Activated CD4-positive, alpha-beta T cell treated with anti-CD3 and anti-CD28 coated beads, Interleukin-2, amount 10 ng/mL, durations not matched to agents 24 days and 14 days (primary cell): ENCODE measurements at regions of chr1 and their contacts with region 1.

Region 1: GRCh38 chr1:35030756-35031446 is 844 bp downstream of the ZMYM6 start:
- DNase-seq: peak; percentile 82
- H3K4me3 Mint-ChIP-seq: peak overlapping the region; percentile 99
- H3K27ac Mint-ChIP-seq: peak overlapping the region; percentile 93
- H3K4me1 Mint-ChIP-seq: peaks cover 23% of the 10 kb centered on the region
- H3K27me3 Mint-ChIP-seq: peaks cover 2% of the 10 kb centered on the region

Region 2: GRCh38 chr1:34859446-34860200 is 171.3 kb before region 1 on chr1 and contains the start of gene SMIM12:
- intact Hi-C with region 1: loop called (anchors 5 kb)
- DNase-seq: peak; percentile 97
- H3K4me3 Mint-ChIP-seq: peak within 1 kb of the TSS; percentile 95
- H3K27ac Mint-ChIP-seq: peak within 1 kb of the TSS; percentile 99
- H3K4me1 Mint-ChIP-seq: peaks cover 43% of the 10 kb centered on the region
- H3K27me3 Mint-ChIP-seq: no peaks in the 10 kb centered on the region
- total RNA-seq, gene SMIM12: 63.2 TPM in 2 replicates

Region 3: DNA sequence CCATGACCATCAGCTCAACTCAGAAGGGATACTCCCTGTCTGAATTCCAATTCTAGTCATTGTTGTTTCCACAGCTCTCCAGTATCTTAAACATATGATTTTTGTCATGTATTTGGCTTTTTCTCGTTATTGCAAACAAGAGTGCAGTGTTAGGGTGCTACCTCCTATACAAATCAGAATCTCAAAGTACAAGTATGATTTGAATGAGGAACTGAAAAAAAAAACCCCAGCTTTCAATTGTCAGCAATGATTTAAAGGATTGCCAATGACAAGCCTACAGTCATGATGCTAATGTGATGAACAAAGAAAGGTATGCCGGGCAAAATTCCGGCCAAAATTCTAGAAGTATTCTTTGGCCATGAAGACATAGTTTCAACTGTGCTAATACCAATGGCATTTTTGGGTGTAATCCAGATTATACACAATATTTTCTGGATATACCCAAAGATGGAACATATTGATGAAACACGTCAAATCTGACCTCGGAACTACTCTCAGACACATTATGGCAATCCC is 60.6 kb before region 1 on chr1:
- intact Hi-C with region 1: no loop called
- DNase-seq: no peak
- H3K4me3 Mint-ChIP-seq: no peak overlapping the region
- H3K27ac Mint-ChIP-seq: no peak overlapping the region
- H3K4me1 Mint-ChIP-seq: no peaks in the 10 kb centered on the region
- H3K27me3 Mint-ChIP-seq: peaks cover 6% of the 10 kb centered on the region

Region 4: GRCh38 chr1:34984793-34985608 is 45.9 kb before region 1 on chr1 and contains the start of gene TMEM35B:
- intact Hi-C with region 1: loop called (anchors 5 kb)
- DNase-seq: peak; percentile 95
- H3K4me3 Mint-ChIP-seq: peak within 1 kb of the TSS; percentile 95
- H3K27ac Mint-ChIP-seq: peak within 1 kb of the TSS; percentile 92
- H3K4me1 Mint-ChIP-seq: peaks cover 32% of the 10 kb centered on the region
- H3K27me3 Mint-ChIP-seq: no peaks in the 10 kb centered on the region
- total RNA-seq, gene TMEM35B: 20.1 and 22.1 TPM in 2 replicates

Region 5: GRCh38 chr1:35171579-35172421 is 140.9 kb after region 1 on chr1:
- intact Hi-C with region 1: no loop called
- DNase-seq: no peak
- H3K4me3 Mint-ChIP-seq: no peak overlapping the region
- H3K27ac Mint-ChIP-seq: no peak overlapping the region
- H3K4me1 Mint-ChIP-seq: no peaks in the 10 kb centered on the region
- H3K27me3 Mint-ChIP-seq: peaks cover 2% of the 10 kb centered on the region

Region 6: DNA sequence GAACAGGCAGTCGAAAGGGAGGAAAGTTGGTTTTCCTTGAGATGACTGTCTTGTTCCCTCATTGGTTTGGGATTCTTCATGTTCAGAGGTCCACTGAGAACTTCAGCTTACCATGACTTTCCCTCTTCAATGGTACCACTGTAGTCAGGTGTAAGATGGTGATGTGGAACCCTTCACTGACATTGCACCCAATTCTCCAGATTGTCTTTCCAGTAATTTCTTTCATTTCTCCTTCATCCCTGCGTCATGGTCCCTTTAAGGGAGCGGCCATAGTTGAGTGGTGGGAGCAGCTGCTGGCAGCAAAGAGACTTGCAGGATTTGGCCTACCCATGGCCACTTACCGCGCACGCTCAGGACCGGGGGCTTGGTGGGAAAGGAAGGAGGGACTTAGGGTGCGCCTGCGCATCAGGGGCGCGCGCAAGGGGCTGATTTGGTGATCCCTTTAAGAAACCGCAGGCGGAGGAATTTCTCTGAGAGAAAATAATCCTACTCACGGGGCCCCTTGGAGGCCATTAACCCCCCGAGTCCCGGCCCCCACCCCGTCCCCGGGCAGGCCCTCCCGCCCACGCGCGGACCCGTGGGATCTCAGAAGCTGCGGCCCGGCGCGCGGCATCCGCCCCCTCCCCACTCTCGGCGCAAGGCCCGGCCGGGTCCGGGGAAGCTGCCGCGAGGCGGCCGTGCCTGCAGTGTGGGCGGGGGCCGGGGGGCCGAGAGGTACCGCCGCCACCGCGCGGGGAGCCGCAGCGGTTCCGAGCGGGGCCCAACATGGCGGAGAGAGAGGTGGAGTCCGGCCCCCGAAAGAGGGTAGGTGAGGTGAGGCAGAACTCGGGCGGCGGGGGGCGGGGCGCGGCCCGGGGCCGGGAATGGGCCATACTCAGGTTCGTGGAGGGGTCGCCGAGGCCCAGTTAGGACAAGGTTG is 237.6 kb after region 1 on chr1 and contains the start of gene ZMYM4:
- intact Hi-C with region 1: loop called (anchors 2 kb)
- DNase-seq: peak; percentile 97
- H3K4me3 Mint-ChIP-seq: peak within 1 kb of the TSS; percentile 95
- H3K27ac Mint-ChIP-seq: peak within 1 kb of the TSS; percentile 97
- H3K4me1 Mint-ChIP-seq: peaks cover 27% of the 10 kb centered on the region
- H3K27me3 Mint-ChIP-seq: peaks cover 6% of the 10 kb centered on the region
- total RNA-seq, gene ZMYM4: 25.6 and 31.0 TPM in 2 replicates